Dendritic cell treated with granulocyte-macrophage colony-stimulating factor and Interleukin-4, amounts not matched to agents 40 ng/mL and 50 ng/mL, for 4 days (primary cell): ENCODE measurements at regions of chr17 and their contacts with region 1.

Region 1: DNA sequence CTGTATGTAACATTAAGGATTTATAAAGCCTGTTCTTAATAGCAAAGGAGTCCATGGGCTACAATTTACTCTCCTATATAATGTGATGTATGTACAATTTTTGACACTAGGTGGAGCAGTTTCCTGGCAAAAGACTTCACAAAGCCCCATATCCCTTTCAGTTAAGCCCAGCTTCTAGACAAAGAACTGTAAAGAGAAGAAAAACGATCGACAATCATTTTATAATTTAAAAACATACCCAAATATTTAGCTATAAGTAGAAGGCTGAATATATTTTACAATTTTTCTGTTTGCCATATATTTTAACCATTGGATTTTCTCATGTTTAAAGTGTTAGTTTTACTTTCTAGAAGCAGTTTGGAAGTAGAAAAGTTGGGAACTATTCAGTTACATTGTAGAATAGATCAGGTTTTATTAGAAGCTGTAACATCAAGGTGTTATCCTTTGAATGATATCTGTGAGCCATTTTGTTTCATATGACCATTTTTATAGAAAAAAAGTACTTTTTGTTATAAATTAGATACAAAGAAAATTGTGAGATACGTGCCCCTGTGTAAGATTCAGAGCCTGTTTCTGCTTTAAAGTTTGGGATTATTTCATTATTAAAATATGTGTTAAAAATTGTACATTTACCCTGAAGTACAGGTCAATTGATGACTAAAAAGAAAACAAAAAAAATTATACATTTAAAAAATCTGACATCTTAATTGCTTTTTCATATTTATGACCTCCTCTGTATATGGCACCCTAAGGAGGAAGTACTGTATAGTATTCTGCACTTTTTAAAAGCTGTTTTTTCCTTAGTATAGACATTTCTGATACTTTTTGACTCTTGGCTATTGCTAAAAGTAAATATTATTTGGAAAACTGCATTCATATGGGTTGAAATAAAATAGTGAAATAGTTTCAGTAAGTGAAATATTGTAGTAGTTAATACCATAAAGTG is 46.3 kb downstream of the VMP1 start:
- H3K4me3 Mint-ChIP-seq: no peak overlapping the region
- H3K27ac Mint-ChIP-seq: peak overlapping the region; percentile 83
- H3K4me1 Mint-ChIP-seq: peaks cover 37% of the 10 kb centered on the region
- H3K27me3 Mint-ChIP-seq: no peaks in the 10 kb centered on the region

Region 2: GRCh38 chr17:59688008-59688407 is 65.8 kb before region 1 on chr17:
- intact Hi-C with region 1: no loop called
- H3K4me3 Mint-ChIP-seq: no peak overlapping the region
- H3K27ac Mint-ChIP-seq: no peak overlapping the region
- H3K4me1 Mint-ChIP-seq: no peaks in the 10 kb centered on the region
- H3K27me3 Mint-ChIP-seq: no peaks in the 10 kb centered on the region

Region 3: GRCh38 chr17:59846394-59847165 is 92.8 kb after region 1 on chr17:
- intact Hi-C with region 1: loop called (anchors 2 kb)
- H3K4me3 Mint-ChIP-seq: peak overlapping the region; percentile 23
- H3K27ac Mint-ChIP-seq: peak overlapping the region; percentile 100
- H3K4me1 Mint-ChIP-seq: peaks cover 76% of the 10 kb centered on the region
- H3K27me3 Mint-ChIP-seq: no peaks in the 10 kb centered on the region